Breast epithelium (tissue), 4 donors: ENCODE measurements at regions of chr17 and their contacts with region 1.

Region 1: DNA sequence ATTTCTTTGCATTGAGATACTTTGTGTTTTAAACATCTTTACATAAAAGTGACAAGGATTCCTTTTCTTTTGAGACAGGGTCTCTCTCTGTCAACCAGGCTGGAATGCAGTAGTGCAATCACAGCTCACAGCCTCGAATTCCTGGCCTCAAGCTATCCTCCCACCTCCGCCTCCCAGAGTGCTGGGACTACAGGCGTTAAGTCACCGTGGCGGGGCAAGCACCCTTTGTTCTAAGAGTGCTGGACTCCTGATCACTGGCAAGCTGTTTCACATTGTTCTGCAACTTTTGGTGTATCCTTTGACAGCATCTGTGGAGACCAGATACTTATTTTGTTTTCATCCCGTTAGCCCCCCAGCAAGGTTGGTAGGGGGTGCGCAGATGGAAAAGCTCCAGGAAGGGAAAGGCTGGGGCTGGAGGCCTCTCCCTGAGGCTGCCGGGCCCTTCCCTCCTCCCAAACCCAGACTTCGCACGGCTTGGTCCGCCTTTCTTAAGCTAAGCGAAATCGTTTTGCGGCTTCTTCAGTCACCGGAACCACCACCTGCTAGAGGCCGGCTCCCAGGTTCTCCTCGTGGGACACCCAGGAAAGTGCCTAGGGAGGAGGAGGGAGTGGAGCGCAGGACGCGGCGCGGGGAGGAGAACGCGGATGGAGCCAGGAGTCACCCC is 1.1 kb downstream of the ST6GALNAC2 start:
- DNase-seq: no peak
- H3K4me3 ChIP-seq: peak overlapping the region; percentile 72 to 85 (median 76)
- H3K27ac ChIP-seq: peak overlapping the region; percentile 88 to 92
- H3K4me1 ChIP-seq: peaks cover 0 to 7% of the 10 kb centered on the region in 2 donors
- H3K27me3 ChIP-seq: peaks cover 3 to 5% of the 10 kb centered on the region in 2 donors
- CTCF ChIP-seq: no peak
- POLR2A ChIP-seq: no peak

Region 2: GRCh38 chr17:75539967-75540711 is 1044.4 kb before region 1 on chr17:
- intact Hi-C with region 1: loop called (anchors 5 kb)
- DNase-seq: no peak
- H3K4me3 ChIP-seq: no peak overlapping the region
- H3K27ac ChIP-seq: peak overlapping the region in 1 of 2 donors; percentile 2
- H3K4me1 ChIP-seq: no peaks in the 10 kb centered on the region
- H3K27me3 ChIP-seq: no peaks in the 10 kb centered on the region
- CTCF ChIP-seq: no peak
- POLR2A ChIP-seq: no peak